AG04449 (cell line): ENCODE measurements at regions of chr7 and their contacts with region 1.

Region 1: GRCh38 chr7:139023076-139023475 is 12.8 kb downstream of the ZC3HAV1L start:
- DNase-seq: no peak
- H3K4me3 ChIP-seq: no peak overlapping the region
- CTCF ChIP-seq: no peak

Region 2: GRCh38 chr7:138834583-138834982 is 188.5 kb before region 1 on chr7:
- CTCF ChIA-PET with region 1: no interaction called
- POLR2A ChIA-PET with region 1: no interaction called
- DNase-seq: no peak
- H3K4me3 ChIP-seq: no peak overlapping the region
- CTCF ChIP-seq: no peak

Region 3: GRCh38 chr7:139035586-139036353 is 12.7 kb after region 1 on chr7 and contains the start of gene ZC3HAV1L:
- CTCF ChIA-PET with region 1: interaction called, 33 read pairs
- POLR2A ChIA-PET with region 1: interaction called, 3 read pairs
- DNase-seq: no peak
- H3K4me3 ChIP-seq: peak within 1 kb of the TSS; percentile 80
- CTCF ChIP-seq: no peak